Lower leg skin (tissue), 4 donors: ENCODE measurements at regions of chr16 and their contacts with region 1.

Region 1: DNA sequence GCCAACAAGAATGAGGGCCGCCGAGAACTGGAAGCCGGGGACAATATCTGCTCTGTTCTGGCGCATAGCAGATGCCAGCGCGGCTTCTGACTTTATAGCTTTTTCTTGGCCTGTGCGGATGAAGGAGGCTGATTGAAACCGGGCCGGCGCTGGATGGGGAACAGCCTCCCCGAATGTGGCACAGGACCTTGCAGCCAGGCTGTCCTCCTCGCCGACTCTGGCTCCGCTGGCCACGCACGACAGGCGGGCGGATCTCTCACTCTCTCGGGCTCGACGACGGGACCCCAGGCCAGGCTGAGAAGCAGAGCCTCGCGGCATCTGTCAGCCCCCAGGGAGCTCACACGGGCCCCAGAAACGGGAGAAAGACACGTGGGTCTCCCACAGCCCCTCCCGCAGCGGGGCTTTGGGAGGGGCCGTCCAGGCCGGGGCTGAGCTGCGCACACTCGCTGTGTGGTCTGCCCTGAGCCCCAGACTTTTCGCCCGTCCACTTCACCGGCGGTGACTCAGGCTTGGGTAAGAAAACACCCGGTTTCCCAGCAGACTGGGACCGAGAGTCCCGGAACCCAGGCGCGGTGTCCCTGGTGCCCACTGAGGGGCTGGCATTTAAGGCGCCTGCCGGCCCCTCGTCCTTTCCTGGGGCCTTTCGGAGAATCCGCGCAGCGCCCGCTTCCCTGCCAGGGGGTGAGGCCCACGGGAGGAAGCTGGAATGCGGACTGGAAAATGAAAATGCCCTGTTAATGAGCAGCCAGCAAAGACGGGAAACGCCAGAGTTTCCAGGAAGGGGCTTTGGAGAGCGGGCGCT is 100.5 kb downstream of the C16orf95 start:
- DNase-seq: peak in 1 of 2 donors; percentile 82
- H3K4me3 ChIP-seq: no peak overlapping the region
- CTCF ChIP-seq: no peak
- POLR2A ChIP-seq: no peak

Region 2: GRCh38 chr16:86542766-86543755 is 673.6 kb before region 1 on chr16:
- intact Hi-C with region 1: loop called (anchors 5 kb)
- DNase-seq: no peak
- H3K4me3 ChIP-seq: no peak overlapping the region
- CTCF ChIP-seq: no peak
- POLR2A ChIP-seq: no peak

Region 3: GRCh38 chr16:87263471-87263961 is 46.8 kb after region 1 on chr16:
- intact Hi-C with region 1: no loop called
- DNase-seq: peak in 1 of 2 donors; percentile 70
- H3K4me3 ChIP-seq: no peak overlapping the region
- CTCF ChIP-seq: no peak
- POLR2A ChIP-seq: no peak